Ascending aorta (tissue), 2 donors: ENCODE measurements at regions of chr3 and their contacts with region 1.

Region 1: DNA sequence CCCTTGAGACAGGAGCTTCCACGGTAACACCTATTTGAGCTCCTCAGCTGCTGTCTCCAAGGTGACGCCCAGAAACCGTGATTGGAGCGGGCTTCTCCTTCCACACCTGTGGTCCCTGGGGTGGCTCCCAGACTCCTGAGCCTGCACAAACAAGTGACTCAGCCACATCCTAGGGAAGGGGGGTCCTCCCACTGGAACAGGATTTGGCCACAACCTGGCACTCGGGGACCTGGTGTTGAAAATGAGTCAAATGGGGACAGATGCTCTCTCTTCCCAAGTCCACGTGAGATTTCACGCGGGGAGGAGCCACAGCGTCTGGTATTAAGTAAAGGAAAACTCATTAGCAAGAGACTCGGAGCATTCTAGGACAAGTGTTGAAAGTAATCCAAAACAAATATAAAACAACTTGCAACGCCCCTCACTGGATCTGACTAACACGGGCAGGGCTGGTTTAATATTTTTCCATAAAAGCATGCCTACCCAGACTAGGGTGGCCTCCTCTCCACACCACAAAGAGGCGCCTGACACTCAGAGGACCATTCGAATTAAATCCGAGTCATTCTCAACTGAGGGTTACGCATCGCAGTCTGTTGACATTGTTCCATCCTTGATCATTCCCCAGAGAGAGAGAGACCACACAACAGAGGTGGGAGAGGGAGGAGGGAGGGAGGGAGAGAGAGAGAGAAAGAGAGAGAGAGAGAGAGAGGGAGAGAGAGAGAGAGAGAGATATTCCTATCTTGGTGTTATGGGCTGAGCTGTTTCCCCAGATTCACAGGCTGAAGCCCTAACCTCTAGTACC is 74.4 kb downstream of the MGLL start:
- DNase-seq: peak; percentile 92 to 95
- H3K4me3 ChIP-seq: peak overlapping the region in 1 of 2 donors; percentile 28
- H3K27ac ChIP-seq: peak overlapping the region; percentile 84 to 85
- H3K4me1 ChIP-seq: peaks cover 8 to 28% of the 10 kb centered on the region in 2 donors
- H3K27me3 ChIP-seq: no peaks in the 10 kb centered on the region
- CTCF ChIP-seq: peak; percentile 12 to 27 (median 18)

Region 2: GRCh38 chr3:127598841-127599570 is 148.9 kb before region 1 on chr3:
- intact Hi-C with region 1: loop called (anchors 5 kb)
- DNase-seq: no peak
- H3K4me3 ChIP-seq: peak overlapping the region; percentile 64 to 69
- H3K27ac ChIP-seq: peak overlapping the region; percentile 63 to 70
- H3K4me1 ChIP-seq: peaks cover 0 to 8% of the 10 kb centered on the region in 2 donors
- H3K27me3 ChIP-seq: no peaks in the 10 kb centered on the region
- CTCF ChIP-seq: no peak

Region 3: DNA sequence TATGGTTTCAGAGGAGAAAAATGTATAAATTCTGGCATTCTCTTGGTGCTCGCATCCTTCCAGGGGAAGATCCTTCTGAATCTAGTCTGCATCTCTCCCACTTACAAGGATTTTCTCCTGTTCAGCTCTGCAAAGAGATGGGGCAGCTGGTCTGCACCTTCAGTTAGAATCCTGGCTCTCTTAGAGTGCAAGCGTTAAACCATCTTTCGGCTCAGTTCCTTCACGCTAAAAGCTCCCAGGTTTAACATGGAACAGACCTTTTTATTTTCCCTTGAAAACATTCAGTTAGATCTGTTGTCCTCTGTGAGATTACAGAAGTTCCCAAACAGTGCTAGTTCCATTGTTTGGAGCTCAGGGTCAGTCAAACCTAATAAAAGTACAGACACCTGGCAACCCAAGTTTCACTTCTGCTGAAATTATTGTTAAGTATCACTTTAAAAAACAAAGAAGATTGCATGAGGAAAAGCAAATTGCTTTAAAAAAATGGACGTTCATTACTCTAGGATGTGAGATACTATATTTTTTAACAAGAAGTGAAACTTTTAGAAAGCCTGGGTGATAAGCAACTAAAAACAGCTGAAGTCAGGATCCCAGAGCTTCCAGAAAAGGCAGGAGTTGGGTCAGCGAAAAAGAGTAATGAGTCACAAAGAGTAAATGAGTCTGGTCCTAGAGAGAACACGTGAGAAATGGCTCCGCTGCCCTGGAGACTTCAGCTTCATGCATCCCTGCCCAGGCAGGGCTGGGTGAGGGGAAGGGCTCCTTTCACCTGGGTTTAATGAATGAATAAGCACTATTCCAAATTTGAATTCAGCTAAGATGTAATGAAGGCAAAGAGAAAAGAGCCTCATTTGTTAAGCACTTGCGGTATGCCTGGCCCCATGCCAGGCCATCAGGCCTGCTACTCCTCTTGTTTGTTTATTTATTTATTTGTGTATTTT is 11.9 kb before region 1 on chr3:
- intact Hi-C with region 1: loop called (anchors 1 kb)
- DNase-seq: peak in 1 of 2 donors; percentile 78
- H3K4me3 ChIP-seq: peak overlapping the region in 1 of 2 donors; percentile 35
- H3K27ac ChIP-seq: peak overlapping the region; percentile 57 to 62
- H3K4me1 ChIP-seq: peaks cover 5 to 68% of the 10 kb centered on the region in 2 donors
- H3K27me3 ChIP-seq: no peaks in the 10 kb centered on the region
- CTCF ChIP-seq: no peak

Region 4: DNA sequence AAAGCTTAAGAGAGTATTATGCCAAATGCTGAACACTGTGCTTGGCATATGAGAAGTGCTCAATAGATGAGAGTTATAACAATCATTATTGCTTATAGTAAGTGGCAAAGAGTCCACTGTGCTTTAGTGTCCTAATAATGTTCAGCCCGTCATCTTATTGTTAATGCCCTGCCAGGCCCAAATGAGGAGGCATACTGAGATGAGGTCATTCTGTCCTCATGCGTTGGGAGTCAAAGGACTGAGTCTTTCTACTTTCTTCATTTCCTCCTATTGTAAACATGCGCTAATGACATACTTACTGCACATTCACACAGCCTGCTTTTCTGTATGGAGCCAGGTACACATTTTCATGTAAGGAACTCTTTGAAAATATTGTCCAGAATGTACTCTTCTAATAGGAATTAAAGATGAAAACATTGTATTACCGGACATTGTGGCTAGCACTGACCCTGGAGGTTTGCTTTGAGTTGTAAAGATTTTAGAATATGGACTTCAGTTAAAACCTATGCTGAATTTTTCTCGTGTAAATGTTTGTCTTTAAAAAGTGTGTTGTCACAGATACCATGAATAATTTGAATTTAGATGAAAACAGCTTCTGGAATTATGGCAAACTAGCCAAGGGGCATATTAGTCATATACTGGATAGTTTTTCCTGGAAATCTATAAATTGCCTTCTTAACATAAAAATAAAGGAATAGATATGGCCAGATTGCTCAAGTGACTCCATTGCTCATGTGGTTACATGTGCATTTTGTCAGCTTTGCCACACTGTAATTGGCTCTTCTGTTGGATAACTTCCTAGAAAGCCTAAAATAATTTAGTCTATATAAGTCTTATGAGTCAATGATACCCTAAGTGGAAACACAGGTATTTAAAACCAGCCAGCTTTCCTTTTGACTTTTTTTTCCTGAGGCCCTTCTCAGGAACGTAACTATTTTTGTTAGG is 205.4 kb after region 1 on chr3:
- intact Hi-C with region 1: loop called (anchors 5 kb)
- DNase-seq: no peak
- H3K4me3 ChIP-seq: no peak overlapping the region
- H3K27ac ChIP-seq: peak overlapping the region; percentile 58 to 66
- H3K4me1 ChIP-seq: peaks cover 0 to 20% of the 10 kb centered on the region in 2 donors
- H3K27me3 ChIP-seq: no peaks in the 10 kb centered on the region
- CTCF ChIP-seq: no peak